Endothelial cell of umbilical vein (primary cell): ENCODE measurements at regions of chr22 and their contacts with region 1.

Region 1: GRCh38 chr22:23849009-23850006 is 8.4 kb upstream of the SLC2A11 start:
- DNase-seq: peak; percentile 74
- H3K4me3 ChIP-seq: no peak overlapping the region
- H3K27ac ChIP-seq: no peak overlapping the region
- H3K4me1 ChIP-seq: peaks cover 4% of the 10 kb centered on the region
- H3K27me3 ChIP-seq: no peaks in the 10 kb centered on the region
- CTCF ChIP-seq: peak; percentile 98 to 99
- POLR2A ChIP-seq: no peak

Region 2: DNA sequence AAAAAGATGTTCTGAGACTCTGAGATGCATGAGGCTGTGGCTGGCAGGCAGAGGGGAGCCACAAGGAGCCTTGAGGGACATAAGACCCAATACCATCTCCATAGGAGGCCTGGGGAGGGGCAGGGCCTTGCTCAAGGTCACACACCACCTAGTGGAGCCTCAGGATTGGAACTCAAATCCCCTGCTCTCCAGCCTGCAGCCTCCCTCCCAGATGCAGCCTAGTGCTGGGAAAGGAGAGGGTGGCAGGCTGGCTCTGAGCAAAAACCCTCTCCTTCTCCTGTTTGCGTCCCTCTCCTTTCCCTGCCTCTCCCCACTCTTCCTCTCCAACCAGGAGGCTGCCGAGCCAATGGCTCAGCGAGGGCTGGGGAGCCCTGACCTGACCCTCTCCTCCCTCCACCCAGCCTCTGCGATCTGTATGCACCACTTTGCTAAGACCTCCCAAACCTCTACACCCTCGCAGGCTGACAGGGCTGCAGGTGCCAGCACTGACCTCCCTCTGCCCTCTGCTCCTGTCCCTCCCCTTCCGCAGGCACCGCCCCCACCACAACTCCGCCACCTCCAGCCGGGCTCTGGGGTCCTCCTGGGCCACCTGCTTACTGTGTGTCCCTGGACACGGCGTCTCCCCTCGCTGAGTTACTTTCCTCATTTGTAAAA is 283.9 kb before region 1 on chr22:
- CTCF ChIA-PET with region 1: no interaction called
- POLR2A ChIA-PET with region 1: no interaction called
- dilution Hi-C with region 1: no loop called
- intact Hi-C with region 1: no loop called
- DNase-seq: no peak
- H3K4me3 ChIP-seq: no peak overlapping the region
- H3K27ac ChIP-seq: no peak overlapping the region
- H3K4me1 ChIP-seq: peaks cover 2% of the 10 kb centered on the region
- H3K27me3 ChIP-seq: peaks cover 16 to 19% of the 10 kb centered on the region in 2 experiments
- CTCF ChIP-seq: peak in 1 of 2 donors; percentile 9
- POLR2A ChIP-seq: no peak

Region 3: DNA sequence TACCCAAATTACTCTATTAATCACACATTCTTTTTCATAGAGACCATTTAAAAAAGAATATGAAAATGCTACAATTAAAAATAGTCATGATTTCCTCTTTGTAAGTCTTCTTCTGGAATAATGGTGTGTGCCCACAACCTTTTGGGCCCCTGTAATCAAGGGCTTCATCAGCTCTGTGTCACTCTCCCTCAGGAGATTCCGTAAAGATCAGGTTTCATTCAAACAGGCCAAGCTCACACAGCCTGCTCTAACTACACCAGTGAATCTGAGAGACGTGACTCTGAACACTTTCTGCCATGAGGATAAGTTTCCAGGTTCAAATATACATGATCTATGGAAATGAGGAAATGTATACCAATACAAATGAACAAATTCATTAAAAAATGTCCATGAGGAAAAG is 226.7 kb before region 1 on chr22:
- CTCF ChIA-PET with region 1: interaction called, 10 read pairs
- POLR2A ChIA-PET with region 1: no interaction called
- dilution Hi-C with region 1: no loop called
- intact Hi-C with region 1: loop called (anchors 5 kb)
- DNase-seq: no peak
- H3K4me3 ChIP-seq: no peak overlapping the region
- H3K27ac ChIP-seq: no peak overlapping the region
- H3K4me1 ChIP-seq: no peaks in the 10 kb centered on the region
- H3K27me3 ChIP-seq: peaks cover 0 to 9% of the 10 kb centered on the region in 2 experiments
- CTCF ChIP-seq: no peak
- POLR2A ChIP-seq: no peak

Region 4: GRCh38 chr22:23767673-23768548 is 81.4 kb before region 1 on chr22 and contains the start of gene CHCHD10:
- CTCF ChIA-PET with region 1: interaction called, 63 read pairs
- POLR2A ChIA-PET with region 1: no interaction called
- dilution Hi-C with region 1: no loop called
- intact Hi-C with region 1: loop called (anchors 1 kb)
- DNase-seq: peak; percentile 73
- H3K4me3 ChIP-seq: peak within 1 kb of the TSS; percentile 47 to 74 (median 55)
- H3K27ac ChIP-seq: peak within 1 kb of the TSS; percentile 43
- H3K4me1 ChIP-seq: peaks cover 22% of the 10 kb centered on the region
- H3K27me3 ChIP-seq: no peaks in the 10 kb centered on the region
- CTCF ChIP-seq: peak; percentile 81 to 93
- POLR2A ChIP-seq: peak; percentile 62
- total RNA-seq, gene CHCHD10: 64.8 and 75.6 TPM in 2 replicates

Region 5: GRCh38 chr22:23786752-23787599 is 62.3 kb before region 1 on chr22 and contains the start of gene SMARCB1:
- CTCF ChIA-PET with region 1: interaction called, 15 read pairs
- POLR2A ChIA-PET with region 1: no interaction called
- dilution Hi-C with region 1: no loop called
- intact Hi-C with region 1: no loop called
- DNase-seq: peak; percentile 84
- H3K4me3 ChIP-seq: peak within 1 kb of the TSS; percentile 19 to 81 (median 78)
- H3K27ac ChIP-seq: peak within 1 kb of the TSS; percentile 92
- H3K4me1 ChIP-seq: peaks cover 13% of the 10 kb centered on the region
- H3K27me3 ChIP-seq: no peaks in the 10 kb centered on the region
- CTCF ChIP-seq: no peak
- POLR2A ChIP-seq: peak; percentile 75
- total RNA-seq, gene SMARCB1: 113 and 130 TPM in 2 replicates

Region 6: DNA sequence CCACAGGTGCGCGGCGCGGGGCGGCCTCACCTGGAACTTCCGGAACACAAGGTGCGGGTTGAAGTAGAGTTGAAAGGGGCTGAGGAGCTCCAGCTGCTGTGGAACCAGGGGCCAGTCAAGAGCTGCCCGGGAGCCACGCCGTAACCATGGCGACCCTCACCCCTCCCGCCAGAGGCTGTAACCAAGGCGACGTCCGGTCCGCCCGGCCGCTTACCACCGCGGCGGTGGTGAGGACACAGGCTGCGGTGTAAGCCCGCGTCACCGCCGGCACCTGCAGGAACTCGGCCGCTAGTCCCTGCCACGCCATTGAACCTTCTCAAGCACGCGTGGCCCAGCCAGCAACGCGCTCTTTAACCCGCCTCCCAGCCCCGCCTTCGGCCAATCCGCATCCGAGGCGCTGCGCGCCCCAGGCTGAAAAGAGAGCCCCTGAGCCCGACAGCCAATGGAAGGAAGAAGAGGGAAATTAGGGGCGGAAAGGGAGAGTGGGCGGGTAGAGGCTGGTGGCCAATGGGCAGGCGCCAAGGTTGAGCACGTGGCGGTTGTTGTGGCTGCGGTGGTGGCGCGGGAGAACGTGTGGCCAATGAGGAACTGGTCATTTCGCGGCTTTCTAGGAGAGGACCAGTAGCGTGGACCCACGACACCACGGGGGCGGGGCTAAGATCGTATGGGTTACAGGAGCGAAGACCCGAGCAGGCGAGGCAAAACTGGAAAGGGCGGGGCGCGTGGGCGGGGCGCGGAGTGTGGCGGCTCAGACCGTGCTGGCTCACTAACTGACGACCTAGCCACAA is 10.4 kb before region 1 on chr22 and contains the start of gene DERL3:
- CTCF ChIA-PET with region 1: interaction called, 16 read pairs
- POLR2A ChIA-PET with region 1: no interaction called
- dilution Hi-C with region 1: no loop called
- intact Hi-C with region 1: no loop called
- DNase-seq: peak; percentile 98
- H3K4me3 ChIP-seq: peak within 1 kb of the TSS in 2 of 3 experiments; percentile 26 to 40
- H3K27ac ChIP-seq: no peak within 1 kb of the TSS
- H3K4me1 ChIP-seq: peaks cover 2% of the 10 kb centered on the region
- H3K27me3 ChIP-seq: peaks cover 0 to 2% of the 10 kb centered on the region in 2 experiments
- CTCF ChIP-seq: no peak
- POLR2A ChIP-seq: no peak
- total RNA-seq, gene DERL3: 2.4 and 3.4 TPM in 2 replicates